MCF 10A (cell line): ENCODE measurements at regions of chr5 and their contacts with region 1.

Region 1: GRCh38 chr5:122192497-122193496 is 63.5 kb downstream of the ZNF474 start:
- DNase-seq: peak; percentile 89
- H3K4me3 Mint-ChIP-seq: no peak overlapping the region
- H3K27ac Mint-ChIP-seq: no peak overlapping the region
- H3K4me1 Mint-ChIP-seq: peaks cover 5% of the 10 kb centered on the region
- H3K27me3 Mint-ChIP-seq: no peaks in the 10 kb centered on the region
- CTCF ChIP-seq: peak; percentile 77

Region 2: DNA sequence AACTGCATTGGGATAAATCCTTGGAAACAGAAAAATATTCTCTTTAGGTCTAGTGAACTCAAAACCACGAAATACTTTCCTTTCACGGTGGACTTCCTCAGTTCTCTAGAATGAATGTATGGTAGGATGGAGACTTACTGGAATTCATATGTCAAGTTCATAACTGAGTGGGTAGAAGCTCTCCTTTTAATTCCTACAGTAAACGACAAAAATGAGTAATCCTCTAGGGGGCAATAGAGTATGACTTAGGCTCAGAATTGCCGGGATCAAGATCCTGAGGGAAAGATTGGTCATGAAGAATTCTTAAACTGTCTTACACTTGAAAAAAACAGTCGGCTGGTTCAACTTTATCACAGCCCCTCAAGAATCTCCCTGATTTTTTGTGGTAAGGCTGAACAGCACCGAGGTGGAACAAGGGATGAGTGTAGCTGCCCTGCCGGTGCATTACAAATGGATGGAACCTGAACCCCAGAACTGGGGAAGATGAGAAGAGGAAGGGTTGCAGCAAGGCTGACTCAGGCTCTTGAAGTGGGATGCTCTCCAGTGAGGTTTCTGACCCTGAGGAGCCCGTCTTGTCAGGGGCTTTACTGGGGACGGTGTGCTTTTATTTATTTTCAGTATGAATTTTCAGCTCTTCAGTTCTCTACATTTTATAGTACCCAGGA is 100.7 kb before region 1 on chr5:
- CTCF ChIA-PET with region 1: interaction called, 14 read pairs
- POLR2A ChIA-PET with region 1: no interaction called
- intact Hi-C with region 1: loop called (anchors 1 kb)
- DNase-seq: peak; percentile 73
- H3K4me3 Mint-ChIP-seq: no peak overlapping the region
- H3K27ac Mint-ChIP-seq: no peak overlapping the region
- H3K4me1 Mint-ChIP-seq: peaks cover 5% of the 10 kb centered on the region
- H3K27me3 Mint-ChIP-seq: no peaks in the 10 kb centered on the region
- CTCF ChIP-seq: peak; percentile 70

Region 3: DNA sequence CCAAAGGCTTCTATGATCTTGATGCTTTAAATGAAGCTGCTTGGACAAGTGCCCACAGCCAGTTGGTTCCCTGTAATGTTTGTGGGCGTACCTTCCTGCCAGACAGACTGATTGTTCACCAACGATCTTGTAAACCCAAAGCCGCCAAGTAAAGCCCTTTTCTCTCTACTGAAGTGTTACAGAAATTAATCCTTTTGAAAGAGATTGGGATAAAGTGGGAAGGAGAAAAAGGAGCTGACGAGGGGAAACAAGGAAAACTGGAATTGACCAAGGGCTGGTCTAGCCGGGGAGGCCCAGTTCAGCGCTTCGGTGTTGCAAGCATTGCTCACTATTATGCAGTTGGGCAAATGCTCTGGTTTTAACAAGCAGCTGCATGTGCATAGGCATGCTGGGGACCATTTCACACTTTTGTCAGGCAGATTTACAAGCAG is 10.3 kb before region 1 on chr5:
- CTCF ChIA-PET with region 1: interaction called, 58 read pairs
- POLR2A ChIA-PET with region 1: interaction called, 12 read pairs
- intact Hi-C with region 1: no loop called
- DNase-seq: peak; percentile 96
- H3K4me3 Mint-ChIP-seq: peak overlapping the region; percentile 62
- H3K27ac Mint-ChIP-seq: peak overlapping the region; percentile 85
- H3K4me1 Mint-ChIP-seq: peaks cover 43% of the 10 kb centered on the region
- H3K27me3 Mint-ChIP-seq: no peaks in the 10 kb centered on the region
- CTCF ChIP-seq: no peak

Region 4: DNA sequence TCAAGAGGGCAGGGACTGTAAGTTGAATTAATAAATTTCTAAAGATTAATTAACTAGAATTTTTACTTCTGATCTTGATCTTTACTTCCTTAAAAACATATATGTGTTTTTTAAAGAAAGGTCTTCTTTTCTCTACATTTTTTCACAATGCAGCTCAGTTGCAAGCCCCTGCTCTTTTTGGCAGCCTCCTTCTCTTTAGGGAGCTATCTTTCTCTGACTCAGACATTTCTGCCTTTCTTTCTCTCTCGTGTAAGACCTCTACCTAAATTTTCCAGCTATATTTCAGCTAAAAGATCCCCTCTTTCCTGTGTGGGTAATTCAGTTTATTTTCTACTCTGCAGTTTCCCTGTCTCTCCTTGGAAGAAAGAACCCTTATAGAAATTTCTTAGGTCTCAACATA is 80.9 kb after region 1 on chr5:
- CTCF ChIA-PET with region 1: interaction called, 11 read pairs
- POLR2A ChIA-PET with region 1: no interaction called
- intact Hi-C with region 1: no loop called
- DNase-seq: no peak
- H3K4me3 Mint-ChIP-seq: no peak overlapping the region
- H3K27ac Mint-ChIP-seq: no peak overlapping the region
- H3K4me1 Mint-ChIP-seq: no peaks in the 10 kb centered on the region
- H3K27me3 Mint-ChIP-seq: no peaks in the 10 kb centered on the region
- CTCF ChIP-seq: no peak

Region 5: GRCh38 chr5:122392824-122393223 is 200.0 kb after region 1 on chr5:
- CTCF ChIA-PET with region 1: interaction called, 10 read pairs
- POLR2A ChIA-PET with region 1: interaction called, 3 read pairs
- intact Hi-C with region 1: no loop called
- DNase-seq: peak; percentile 88
- H3K4me3 Mint-ChIP-seq: no peak overlapping the region
- H3K27ac Mint-ChIP-seq: no peak overlapping the region
- H3K4me1 Mint-ChIP-seq: peaks cover 6% of the 10 kb centered on the region
- H3K27me3 Mint-ChIP-seq: no peaks in the 10 kb centered on the region
- CTCF ChIP-seq: no peak

Region 6: DNA sequence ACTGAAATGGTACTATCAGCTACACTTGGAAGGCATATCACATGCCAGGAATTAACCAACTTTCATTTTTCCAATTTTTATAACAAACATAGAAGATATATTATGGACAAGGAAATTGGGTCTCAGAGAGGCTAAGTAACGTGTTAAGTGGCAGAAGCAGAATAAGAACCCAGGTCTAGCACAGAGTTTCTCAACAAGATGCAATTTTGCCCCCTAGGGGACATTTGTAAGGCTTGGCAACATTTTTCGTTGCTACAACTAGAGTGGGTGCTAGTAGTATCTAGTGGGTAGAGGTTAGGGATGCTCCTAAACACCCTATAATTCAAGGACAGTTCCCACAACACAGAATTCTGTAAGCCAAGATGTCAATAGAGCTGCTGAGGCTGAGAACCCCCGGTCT is 299.9 kb after region 1 on chr5:
- CTCF ChIA-PET with region 1: interaction called, 67 read pairs
- POLR2A ChIA-PET with region 1: no interaction called
- intact Hi-C with region 1: loop called (anchors 1 kb)
- DNase-seq: peak; percentile 73
- H3K4me3 Mint-ChIP-seq: no peak overlapping the region
- H3K27ac Mint-ChIP-seq: no peak overlapping the region
- H3K4me1 Mint-ChIP-seq: peaks cover 9% of the 10 kb centered on the region
- H3K27me3 Mint-ChIP-seq: no peaks in the 10 kb centered on the region
- CTCF ChIP-seq: peak; percentile 28

Region 7: GRCh38 chr5:123344816-123345426 is 1152.1 kb after region 1 on chr5:
- CTCF ChIA-PET with region 1: interaction called, 3 read pairs
- POLR2A ChIA-PET with region 1: no interaction called
- intact Hi-C with region 1: loop called (anchors 10 kb)
- DNase-seq: peak; percentile 56
- H3K4me3 Mint-ChIP-seq: no peak overlapping the region
- H3K27ac Mint-ChIP-seq: no peak overlapping the region
- H3K4me1 Mint-ChIP-seq: no peaks in the 10 kb centered on the region
- H3K27me3 Mint-ChIP-seq: no peaks in the 10 kb centered on the region
- CTCF ChIP-seq: peak; percentile 66